ENCODE measurements at regions of chr12 and their contacts with region 1.

Region 1: DNA sequence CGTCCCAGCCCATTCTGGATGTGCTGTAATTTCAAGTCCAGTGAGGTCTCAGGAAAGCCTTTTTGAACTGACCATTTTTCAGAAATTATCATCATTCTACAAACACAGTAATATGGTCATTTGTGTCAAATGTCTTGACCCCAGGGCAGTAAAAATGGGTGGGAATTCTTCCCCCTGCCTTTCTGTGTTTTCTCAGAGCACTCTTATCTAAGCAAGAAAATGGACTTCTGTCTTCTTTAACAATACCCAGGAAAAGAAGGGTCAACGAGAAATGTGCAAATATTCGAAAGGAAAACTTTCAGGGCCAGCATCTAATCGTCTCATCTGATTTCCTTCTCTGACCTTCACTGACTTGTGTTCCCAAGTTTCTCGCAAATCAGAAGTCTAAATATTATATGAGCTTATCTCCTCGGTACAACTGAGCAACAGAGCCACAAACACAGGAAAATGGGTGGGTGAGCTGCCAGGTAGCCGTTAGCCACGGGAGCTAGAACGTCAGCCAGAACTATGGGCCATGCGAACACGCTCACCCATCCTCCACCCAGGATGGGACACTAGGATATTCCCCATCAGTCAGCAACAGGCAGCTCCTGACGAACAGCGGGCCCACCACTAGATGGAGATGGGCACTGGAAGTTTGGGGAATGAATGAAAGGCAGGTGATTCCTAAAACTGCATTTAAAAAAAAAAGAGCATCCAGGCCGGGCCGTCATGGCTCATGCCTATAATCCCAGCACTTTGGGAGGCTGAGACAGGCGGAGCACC is 57.1 kb downstream of the VWF start:
- DNase-seq: peak; percentile 75
- ATAC-seq: peak; percentile 60
- H3K4me3 Mint-ChIP-seq: no peak overlapping the region
- H3K27ac Mint-ChIP-seq: no peak overlapping the region; the same call in 1 of the 2 replicates
- H3K4me1 Mint-ChIP-seq: peaks cover 18% of the 10 kb centered on the region
- H3K27me3 Mint-ChIP-seq: no peaks in the 10 kb centered on the region
- CTCF ChIP-seq: no peak

Region 2: GRCh38 chr12:5868625-5869295 is 198.6 kb before region 1 on chr12:
- CTCF ChIA-PET with region 1: no interaction called
- POLR2A ChIA-PET with region 1: no interaction called
- DNase-seq: no peak
- ATAC-seq: no peak
- H3K4me3 Mint-ChIP-seq: no peak overlapping the region
- H3K27ac Mint-ChIP-seq: no peak overlapping the region
- H3K4me1 Mint-ChIP-seq: peaks cover 20% of the 10 kb centered on the region
- H3K27me3 Mint-ChIP-seq: no peaks in the 10 kb centered on the region
- CTCF ChIP-seq: no peak

Region 3: GRCh38 chr12:6056406-6057240 is 10.7 kb before region 1 on chr12:
- CTCF ChIA-PET with region 1: interaction called, 17 read pairs
- POLR2A ChIA-PET with region 1: no interaction called
- DNase-seq: peak; percentile 70
- ATAC-seq: peak; percentile 79
- H3K4me3 Mint-ChIP-seq: peak overlapping the region; percentile 59
- H3K27ac Mint-ChIP-seq: no peak overlapping the region
- H3K4me1 Mint-ChIP-seq: peaks cover 29% of the 10 kb centered on the region
- H3K27me3 Mint-ChIP-seq: peaks cover 6% of the 10 kb centered on the region
- CTCF ChIP-seq: no peak

Region 4: DNA sequence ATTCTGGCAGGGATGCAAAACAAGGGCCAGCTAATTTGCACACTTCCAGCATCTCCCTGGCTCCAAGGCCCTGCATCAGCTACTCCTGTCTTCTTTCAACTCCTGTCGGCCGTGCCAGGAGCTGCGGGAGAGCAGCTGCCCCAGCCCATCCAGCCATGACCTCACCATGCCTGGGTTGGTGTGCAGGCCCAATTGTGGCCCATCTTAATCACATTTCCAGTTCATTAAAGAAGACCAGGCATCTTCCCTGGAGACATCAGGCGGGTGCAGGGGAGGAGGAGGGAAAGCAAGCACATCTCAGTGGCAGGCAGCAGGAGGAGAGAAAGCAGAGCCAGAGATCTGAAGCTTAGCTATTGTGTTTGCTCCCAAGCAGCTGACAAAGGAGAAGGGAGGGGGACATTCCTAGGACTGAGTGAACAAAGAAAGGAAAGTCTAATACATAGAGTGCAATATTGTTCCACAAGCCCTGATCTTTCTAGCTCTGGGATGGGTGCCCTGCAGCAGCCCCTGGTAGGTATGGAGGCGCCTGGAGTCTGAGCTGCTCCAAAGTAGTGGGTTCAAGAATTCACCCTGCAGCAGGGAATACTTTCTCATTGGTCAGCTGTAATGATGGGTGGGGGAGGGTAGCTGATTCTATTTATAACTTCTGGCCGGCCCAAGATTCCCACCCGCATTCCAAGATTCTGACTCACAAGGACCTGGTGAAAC is 17.1 kb after region 1 on chr12:
- CTCF ChIA-PET with region 1: interaction called, 22 read pairs
- POLR2A ChIA-PET with region 1: interaction called, 4 read pairs
- DNase-seq: no peak
- ATAC-seq: peak; percentile 71
- H3K4me3 Mint-ChIP-seq: peak overlapping the region; percentile 22; the same call in 1 of the 2 replicates
- H3K27ac Mint-ChIP-seq: peak overlapping the region; percentile 51
- H3K4me1 Mint-ChIP-seq: peaks cover 42% of the 10 kb centered on the region
- H3K27me3 Mint-ChIP-seq: peaks cover 6% of the 10 kb centered on the region
- CTCF ChIP-seq: no peak

Region 5: DNA sequence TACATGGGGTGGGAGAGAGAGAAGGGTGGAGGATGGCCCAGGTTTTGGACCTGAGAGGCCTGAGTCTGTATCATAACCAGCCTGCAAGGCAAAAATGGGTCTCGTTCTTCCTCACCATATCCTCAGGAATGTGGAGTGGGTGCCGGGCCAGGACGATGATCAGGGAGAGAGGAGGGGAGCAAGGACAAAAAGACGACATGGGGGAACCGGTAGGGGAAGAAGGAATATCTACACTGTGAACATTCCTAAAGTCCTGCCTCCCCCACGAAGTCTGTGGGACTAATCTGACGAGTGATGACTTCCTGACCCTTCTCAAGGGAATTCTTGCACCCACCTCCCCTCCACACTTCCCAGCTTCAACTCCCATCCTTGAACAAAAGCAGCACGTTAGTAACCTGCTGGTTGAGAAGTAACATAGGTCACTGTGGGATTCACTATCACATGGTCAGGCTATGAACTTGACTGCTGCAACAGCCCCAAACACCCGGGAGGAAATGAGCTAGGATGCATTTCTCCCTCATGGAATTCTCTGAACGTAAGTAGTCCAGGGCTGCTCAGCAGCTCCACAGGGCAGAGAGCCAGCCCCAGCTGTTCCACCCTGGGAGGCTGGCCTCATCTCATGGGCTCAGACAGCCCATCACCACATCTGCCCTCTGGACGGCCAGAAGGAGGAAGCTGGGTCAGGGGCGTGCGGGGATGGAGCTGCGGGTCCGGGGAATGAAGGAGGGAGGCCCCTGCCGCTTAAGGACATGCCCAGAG is 94.0 kb after region 1 on chr12:
- CTCF ChIA-PET with region 1: no interaction called
- POLR2A ChIA-PET with region 1: no interaction called
- DNase-seq: no peak
- ATAC-seq: no peak
- H3K4me3 Mint-ChIP-seq: no peak overlapping the region
- H3K27ac Mint-ChIP-seq: no peak overlapping the region
- H3K4me1 Mint-ChIP-seq: peaks cover 13% of the 10 kb centered on the region; the same call in 1 of the 2 replicates
- H3K27me3 Mint-ChIP-seq: peaks cover 3% of the 10 kb centered on the region; the same call in 1 of the 2 replicates
- CTCF ChIP-seq: no peak

Region 6: DNA sequence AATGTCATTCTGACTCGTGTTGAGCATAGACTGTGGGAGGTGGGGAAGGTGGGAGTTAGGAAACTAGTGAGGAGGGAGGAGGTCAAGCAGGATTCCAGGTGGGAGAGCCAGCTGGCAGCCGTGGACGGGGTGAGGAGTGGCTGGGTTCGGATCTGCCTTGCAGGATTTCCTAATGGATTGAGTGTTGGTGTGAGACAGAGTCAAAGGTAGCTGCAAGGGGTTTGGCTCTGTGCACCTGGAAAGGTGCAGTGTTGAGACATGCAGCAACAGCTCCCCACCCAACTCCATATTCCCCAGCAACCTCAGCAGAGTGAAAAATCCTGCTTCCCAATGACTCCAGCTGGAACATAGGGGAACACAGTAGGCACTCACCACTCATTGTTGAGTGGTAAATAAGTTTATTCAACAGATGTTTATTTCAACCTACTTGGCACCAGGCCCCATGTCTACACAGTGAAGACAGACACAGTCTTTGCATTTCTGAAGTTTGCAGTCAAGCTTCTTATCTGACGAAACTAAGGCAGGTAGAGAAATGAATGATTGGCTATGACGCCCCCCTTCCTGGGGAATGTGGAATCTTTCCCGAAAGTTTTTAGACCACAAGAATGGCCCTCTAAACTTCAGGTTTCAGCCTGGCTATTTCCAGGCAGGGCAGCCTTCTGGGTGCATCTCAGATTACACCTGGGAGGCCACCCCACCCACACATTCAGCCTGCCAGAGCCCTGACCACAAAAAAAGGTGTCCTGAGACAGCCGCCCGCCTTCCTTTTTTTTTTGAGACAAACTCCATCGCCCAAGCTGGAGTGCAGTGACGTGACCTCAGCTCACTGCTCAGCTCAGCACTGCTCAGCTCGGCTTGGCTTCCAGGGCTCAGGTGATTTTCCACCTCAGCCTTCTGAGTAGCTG is 205.2 kb after region 1 on chr12:
- CTCF ChIA-PET with region 1: interaction called, 84 read pairs
- POLR2A ChIA-PET with region 1: no interaction called
- DNase-seq: no peak
- ATAC-seq: peak; percentile 25
- H3K4me3 Mint-ChIP-seq: no peak overlapping the region
- H3K27ac Mint-ChIP-seq: peak overlapping the region; percentile 93
- H3K4me1 Mint-ChIP-seq: peaks cover 61% of the 10 kb centered on the region
- H3K27me3 Mint-ChIP-seq: no peaks in the 10 kb centered on the region; the same call in 1 of the 2 replicates
- CTCF ChIP-seq: no peak